Right cardiac atrium (tissue), 5 donors: ENCODE measurements at regions of chr11 and their contacts with region 1.

Region 1: GRCh38 chr11:113730887-113731726 is 25.0 kb upstream of the TMPRSS5 start:
- DNase-seq: no peak
- ATAC-seq: peak; percentile 60 to 71
- H3K4me3 ChIP-seq: no peak overlapping the region
- H3K27ac ChIP-seq: no peak overlapping the region
- H3K4me1 ChIP-seq: no peaks in the 10 kb centered on the region
- H3K27me3 ChIP-seq: no peaks in the 10 kb centered on the region

Region 2: DNA sequence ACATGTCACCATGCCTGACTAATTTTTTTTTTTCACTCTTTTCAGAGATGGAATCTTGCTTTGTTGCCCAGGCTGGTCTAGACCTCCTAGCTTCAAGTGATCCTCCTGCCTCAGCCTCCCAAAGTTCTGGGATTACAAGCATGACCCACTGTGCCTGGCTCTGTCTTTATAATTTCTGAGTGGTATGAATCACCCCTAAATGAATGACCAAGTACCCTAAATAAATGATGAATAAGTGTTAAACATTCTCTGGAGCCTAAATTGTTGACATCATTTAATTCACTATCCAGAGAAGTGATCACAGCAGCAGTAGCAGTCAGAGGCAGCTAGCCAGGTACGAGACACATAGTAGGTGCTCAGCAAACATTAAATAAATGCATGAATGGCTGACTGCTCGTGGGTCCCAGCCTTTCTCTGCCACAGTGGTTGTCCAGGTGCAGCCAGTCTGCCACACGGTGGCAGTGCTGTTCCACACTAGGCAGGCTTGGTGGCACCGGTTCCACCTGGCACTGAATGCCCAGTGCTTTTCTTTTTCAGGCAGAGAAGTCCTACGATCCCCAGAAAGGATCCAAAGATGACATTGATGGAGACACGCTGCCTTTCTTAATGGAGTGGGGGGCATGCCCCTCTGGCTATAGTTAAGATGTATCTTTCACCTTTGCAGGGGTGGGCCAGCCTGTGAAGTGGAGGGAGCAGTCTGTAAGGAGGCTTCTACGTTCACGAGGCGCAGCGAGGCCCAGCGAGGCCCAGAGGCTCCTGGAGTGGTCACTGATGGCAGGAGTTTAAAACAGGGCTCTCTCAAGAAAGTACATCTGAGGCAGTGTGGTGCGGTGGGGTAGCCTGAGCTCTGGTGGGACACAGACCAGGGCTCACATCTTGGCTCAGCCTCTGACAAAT is 425.4 kb before region 1 on chr11:
- intact Hi-C with region 1: loop called (anchors 5 kb)
- DNase-seq: peak; percentile 80 to 94 (median 89)
- ATAC-seq: peak; percentile 89
- H3K4me3 ChIP-seq: no peak overlapping the region
- H3K27ac ChIP-seq: no peak overlapping the region
- H3K4me1 ChIP-seq: no peaks in the 10 kb centered on the region
- H3K27me3 ChIP-seq: no peaks in the 10 kb centered on the region

Region 3: DNA sequence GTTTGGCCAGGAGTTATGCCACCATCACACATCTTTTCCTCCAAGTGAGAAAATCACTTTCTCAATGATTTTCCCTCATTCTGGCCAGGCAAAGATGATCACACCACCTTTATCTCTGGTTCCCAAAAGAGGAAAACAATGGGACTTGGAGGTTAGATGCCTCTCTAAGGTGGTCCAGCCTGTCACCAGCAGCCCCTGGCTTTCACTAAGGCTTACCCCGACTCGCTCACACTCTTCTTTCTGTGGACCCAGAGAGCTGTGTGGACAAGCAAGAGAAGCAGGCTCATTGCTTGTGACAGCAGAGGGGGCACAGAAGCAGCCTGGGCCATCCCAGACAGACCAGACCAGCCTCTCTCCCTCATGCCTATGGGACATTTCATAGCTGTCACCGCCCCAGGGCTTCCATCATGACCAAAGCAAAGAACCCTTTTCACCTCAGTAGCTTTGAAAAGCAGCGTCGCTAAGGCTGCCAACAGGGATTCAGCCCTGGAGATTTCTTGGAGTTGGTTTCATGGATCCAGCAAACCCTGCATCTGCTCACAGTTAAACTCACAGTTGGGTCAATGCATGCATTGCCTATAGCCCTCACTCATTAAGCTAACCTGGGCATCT is 192.2 kb before region 1 on chr11:
- intact Hi-C with region 1: loop called in 2 of 4 experiments (anchors 5 to 10 kb)
- DNase-seq: no peak
- ATAC-seq: no peak
- H3K4me3 ChIP-seq: no peak overlapping the region
- H3K27ac ChIP-seq: no peak overlapping the region
- H3K4me1 ChIP-seq: no peaks in the 10 kb centered on the region
- H3K27me3 ChIP-seq: no peaks in the 10 kb centered on the region

Region 4: GRCh38 chr11:113546757-113547507 is 184.2 kb before region 1 on chr11:
- intact Hi-C with region 1: loop called in 1 of 4 experiments (anchors 10 kb)
- DNase-seq: no peak
- ATAC-seq: no peak
- H3K4me3 ChIP-seq: no peak overlapping the region
- H3K27ac ChIP-seq: no peak overlapping the region
- H3K4me1 ChIP-seq: no peaks in the 10 kb centered on the region
- H3K27me3 ChIP-seq: no peaks in the 10 kb centered on the region